PC-9 (cell line): ENCODE measurements at regions of chr13 and their contacts with region 1.

Region 1: GRCh38 chr13:20425819-20426219 is 99.8 kb downstream of the CRYL1 start:
- DNase-seq: peak in 1 of 2 experiments; percentile 26
- H3K4me3 ChIP-seq: no peak overlapping the region
- H3K27ac ChIP-seq: no peak overlapping the region
- H3K4me1 ChIP-seq: peaks cover 8% of the 10 kb centered on the region
- H3K27me3 ChIP-seq: no peaks in the 10 kb centered on the region
- CTCF ChIP-seq: no peak

Region 2: DNA sequence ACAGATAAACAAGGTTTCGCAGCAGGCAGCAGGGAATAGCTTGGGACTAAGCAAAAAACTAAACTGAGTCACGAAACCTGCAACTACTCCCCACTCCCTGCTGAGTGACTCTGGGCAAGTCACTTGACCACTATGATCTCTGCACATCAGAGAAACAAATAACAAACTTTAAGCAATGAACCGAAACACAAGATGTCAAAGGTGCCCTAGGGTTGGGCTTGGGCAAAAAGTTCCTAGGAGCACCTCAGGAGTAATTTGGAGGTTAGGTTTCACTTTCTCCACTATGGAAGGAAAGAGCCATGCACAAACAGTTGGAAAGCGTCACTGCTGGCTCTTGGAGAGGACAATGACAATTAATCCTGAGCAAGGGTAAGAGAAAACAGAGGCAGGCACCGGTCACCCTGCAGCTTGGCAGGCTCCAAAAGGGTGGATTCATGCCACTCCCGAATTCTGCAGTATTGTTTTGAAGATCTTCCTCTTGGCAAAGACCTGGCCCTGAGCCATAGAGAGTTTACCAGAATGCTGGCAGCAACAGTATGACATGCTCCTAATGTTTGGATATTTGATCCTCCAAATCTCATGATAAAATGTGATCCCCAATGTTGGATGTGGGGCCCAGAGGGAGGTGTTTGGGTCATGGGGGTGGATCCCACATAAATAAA is 39.5 kb after region 1 on chr13:
- CTCF ChIA-PET with region 1: no interaction called
- POLR2A ChIA-PET with region 1: no interaction called
- intact Hi-C with region 1: loop called (anchors 1 kb)
- DNase-seq: peak; percentile 36 to 48
- H3K4me3 ChIP-seq: no peak overlapping the region
- H3K27ac ChIP-seq: no peak overlapping the region
- H3K4me1 ChIP-seq: peaks cover 24% of the 10 kb centered on the region
- H3K27me3 ChIP-seq: no peaks in the 10 kb centered on the region
- CTCF ChIP-seq: no peak

Region 3: DNA sequence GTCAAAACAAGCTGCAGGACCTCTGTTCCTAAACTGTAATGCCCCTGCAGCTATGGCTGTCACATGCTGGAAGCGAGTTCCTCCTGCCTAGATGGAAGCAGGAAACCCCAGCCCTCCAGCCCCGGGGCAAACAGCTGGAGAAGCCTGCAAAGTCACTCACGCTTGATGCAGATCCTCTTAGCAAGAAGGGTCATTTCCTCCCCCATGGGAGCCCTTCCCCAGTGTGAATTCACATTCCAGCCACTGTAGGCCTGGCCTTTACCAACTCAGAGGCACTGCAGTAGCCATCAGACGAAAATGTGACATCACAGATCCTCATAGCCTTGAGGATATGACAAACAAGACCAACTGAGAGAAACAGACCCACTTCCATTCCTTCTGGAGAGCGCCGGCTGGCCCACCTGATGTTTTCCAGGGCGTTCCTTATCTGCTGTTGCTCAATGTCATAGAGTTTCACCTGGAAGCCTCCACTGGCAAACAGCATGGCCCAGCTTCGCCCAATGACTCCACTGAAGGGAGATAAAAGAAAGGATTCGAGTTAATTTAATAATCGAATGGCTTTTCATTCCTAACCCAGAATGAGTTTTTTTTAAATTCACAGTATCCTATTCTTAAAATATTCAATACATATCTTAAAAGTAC is 86.3 kb after region 1 on chr13:
- CTCF ChIA-PET with region 1: no interaction called
- POLR2A ChIA-PET with region 1: no interaction called
- intact Hi-C with region 1: no loop called
- DNase-seq: no peak
- H3K4me3 ChIP-seq: no peak overlapping the region
- H3K27ac ChIP-seq: no peak overlapping the region
- H3K4me1 ChIP-seq: no peaks in the 10 kb centered on the region
- H3K27me3 ChIP-seq: no peaks in the 10 kb centered on the region
- CTCF ChIP-seq: no peak